A673 (cell line): ENCODE measurements at regions of chr5 and their contacts with region 1.

Region 1: DNA sequence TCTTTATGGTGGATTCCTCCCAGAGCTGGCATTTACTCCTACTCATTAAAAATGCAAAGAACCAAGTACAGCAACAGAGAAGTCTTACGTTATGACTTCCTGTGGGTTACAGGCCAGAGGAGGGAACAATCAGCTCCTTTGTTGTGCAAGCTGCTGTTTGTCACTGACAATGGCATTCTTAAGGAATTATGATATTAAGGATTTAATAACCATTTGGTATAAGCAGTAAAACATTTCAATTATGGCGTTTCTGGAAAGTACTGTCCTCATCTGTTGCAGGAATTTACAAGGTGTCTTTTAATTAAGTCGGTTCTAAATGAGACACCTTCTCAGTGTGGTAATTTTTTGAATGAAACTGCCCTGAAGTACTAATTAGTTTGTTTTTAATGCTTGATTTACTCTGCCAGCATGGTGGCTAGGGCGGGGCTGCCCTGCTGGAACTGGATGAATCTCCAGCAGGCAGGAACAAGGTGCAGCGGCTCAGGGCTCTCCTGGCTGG is 49.1 kb upstream of the VDAC1 start:
- DNase-seq: peak; percentile 93
- H3K4me3 ChIP-seq: no peak overlapping the region
- H3K27ac ChIP-seq: peak overlapping the region; percentile 25
- H3K4me1 ChIP-seq: peaks cover 17% of the 10 kb centered on the region
- H3K27me3 ChIP-seq: no peaks in the 10 kb centered on the region
- CTCF ChIP-seq: no peak

Region 2: DNA sequence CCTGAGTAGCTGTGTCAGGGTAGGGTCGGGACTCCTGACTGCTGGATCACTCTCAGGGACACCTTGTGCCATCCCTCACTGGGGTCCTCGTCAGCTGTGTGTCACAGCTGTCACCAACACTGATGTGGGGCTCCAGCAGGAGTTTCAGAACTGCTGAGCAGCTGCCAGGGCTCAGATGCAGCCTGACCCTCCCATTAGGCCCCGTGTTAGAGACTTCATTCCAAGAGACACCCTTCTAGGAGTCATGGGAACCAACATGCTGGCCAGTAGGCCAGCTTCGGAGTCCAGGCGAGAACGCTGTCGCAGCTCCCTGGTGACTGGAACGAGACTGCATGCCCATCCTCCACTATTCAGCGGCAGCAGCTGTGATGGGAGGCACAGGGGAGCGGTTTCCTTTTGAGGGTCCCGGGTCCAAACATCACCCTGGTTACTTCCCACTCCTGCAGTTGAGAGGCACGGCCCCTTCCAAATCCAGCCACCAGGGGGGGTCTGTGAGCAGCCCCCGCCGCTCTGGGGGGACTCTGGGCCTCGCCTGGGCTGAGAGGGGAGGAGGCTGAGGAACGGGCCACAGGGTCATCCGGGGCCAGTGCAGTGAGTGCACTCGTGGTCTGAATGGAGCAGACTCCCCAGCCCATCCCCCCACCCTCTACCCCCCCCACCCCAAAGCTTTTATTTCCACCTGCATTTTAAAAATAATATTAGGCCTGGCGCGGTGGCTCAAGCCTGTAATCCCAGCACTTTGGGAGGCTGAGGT is 48.0 kb after region 1 on chr5:
- CTCF ChIA-PET with region 1: no interaction called
- POLR2A ChIA-PET with region 1: no interaction called
- intact Hi-C with region 1: loop called (anchors 5 kb)
- DNase-seq: peak; percentile 60
- H3K4me3 ChIP-seq: no peak overlapping the region
- H3K27ac ChIP-seq: no peak overlapping the region
- H3K4me1 ChIP-seq: peaks cover 4% of the 10 kb centered on the region
- H3K27me3 ChIP-seq: no peaks in the 10 kb centered on the region
- CTCF ChIP-seq: peak; percentile 83

Region 3: DNA sequence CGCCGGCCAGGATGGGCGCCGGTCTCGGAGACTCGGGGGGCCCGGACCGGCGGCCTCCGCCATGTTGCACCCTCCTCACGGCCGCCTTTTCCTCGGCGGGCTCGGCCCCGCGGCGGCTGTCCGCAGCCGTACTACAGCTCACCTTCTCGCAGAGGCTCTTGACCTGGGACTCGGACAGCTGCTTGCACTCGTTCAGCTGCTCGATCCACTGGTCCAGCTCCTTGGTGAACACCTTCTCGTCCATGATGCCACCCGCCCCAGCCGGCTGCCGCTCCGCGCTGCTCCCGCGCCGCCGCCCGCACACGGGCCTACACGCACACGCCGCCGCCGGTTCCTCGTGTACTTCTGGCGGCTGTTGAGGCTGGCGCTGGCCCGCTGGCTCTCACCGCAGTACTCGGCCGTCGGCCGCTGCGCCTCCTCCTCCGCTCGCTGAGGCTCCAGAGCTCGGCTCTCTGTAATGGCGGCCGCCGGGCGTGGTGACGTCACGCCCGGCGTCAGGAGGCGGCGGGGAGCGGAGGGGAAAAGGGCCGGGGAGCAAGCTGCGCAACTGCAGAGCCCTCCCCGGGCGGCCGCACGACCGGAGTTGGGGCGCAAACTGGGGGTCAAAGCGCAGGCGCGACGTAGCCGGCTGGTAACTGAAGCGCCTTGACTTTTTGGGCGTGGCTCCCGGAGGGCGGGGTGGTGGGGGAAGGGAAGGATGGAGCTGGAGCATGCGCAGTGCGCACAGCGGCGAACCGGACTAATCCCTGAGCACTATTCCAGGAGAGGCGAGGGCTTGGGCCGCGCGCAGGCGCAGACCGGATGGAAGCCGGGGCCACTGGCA is 171.9 kb after region 1 on chr5 and contains the start of gene PPP2CA:
- CTCF ChIA-PET with region 1: no interaction called
- POLR2A ChIA-PET with region 1: no interaction called
- intact Hi-C with region 1: no loop called
- DNase-seq: peak; percentile 99
- H3K4me3 ChIP-seq: peak within 1 kb of the TSS; percentile 96
- H3K27ac ChIP-seq: peak within 1 kb of the TSS; percentile 99
- H3K4me1 ChIP-seq: peaks cover 8% of the 10 kb centered on the region
- H3K27me3 ChIP-seq: no peaks in the 10 kb centered on the region
- CTCF ChIP-seq: no peak
- total RNA-seq, gene PPP2CA: 227 and 233 TPM in 2 replicates

Region 4: GRCh38 chr5:134798468-134798867 is 744.6 kb after region 1 on chr5:
- CTCF ChIA-PET with region 1: no interaction called
- POLR2A ChIA-PET with region 1: no interaction called
- intact Hi-C with region 1: no loop called
- DNase-seq: no peak
- H3K4me3 ChIP-seq: no peak overlapping the region
- H3K27ac ChIP-seq: no peak overlapping the region
- H3K4me1 ChIP-seq: no peaks in the 10 kb centered on the region
- H3K27me3 ChIP-seq: no peaks in the 10 kb centered on the region
- CTCF ChIP-seq: no peak